Colonic mucosa (tissue), 4 donors: ENCODE measurements at regions of chr3 and their contacts with region 1.

Region 1: GRCh38 chr3:149273096-149273751 is 51.6 kb upstream of the CP start:
- DNase-seq: peak; percentile 53
- H3K4me3 ChIP-seq: no peak overlapping the region
- H3K27ac ChIP-seq: no peak overlapping the region
- H3K4me1 ChIP-seq: peaks cover 3% of the 10 kb centered on the region
- H3K27me3 ChIP-seq: no peaks in the 10 kb centered on the region
- CTCF ChIP-seq: peak; percentile 88

Region 2: GRCh38 chr3:148955544-148956346 is 317.5 kb before region 1 on chr3:
- intact Hi-C with region 1: loop called (anchors 5 kb)
- DNase-seq: peak; percentile 50
- H3K4me3 ChIP-seq: no peak overlapping the region
- H3K27ac ChIP-seq: peak overlapping the region; percentile 50
- H3K4me1 ChIP-seq: no peaks in the 10 kb centered on the region
- H3K27me3 ChIP-seq: no peaks in the 10 kb centered on the region
- CTCF ChIP-seq: peak; percentile 44

Region 3: DNA sequence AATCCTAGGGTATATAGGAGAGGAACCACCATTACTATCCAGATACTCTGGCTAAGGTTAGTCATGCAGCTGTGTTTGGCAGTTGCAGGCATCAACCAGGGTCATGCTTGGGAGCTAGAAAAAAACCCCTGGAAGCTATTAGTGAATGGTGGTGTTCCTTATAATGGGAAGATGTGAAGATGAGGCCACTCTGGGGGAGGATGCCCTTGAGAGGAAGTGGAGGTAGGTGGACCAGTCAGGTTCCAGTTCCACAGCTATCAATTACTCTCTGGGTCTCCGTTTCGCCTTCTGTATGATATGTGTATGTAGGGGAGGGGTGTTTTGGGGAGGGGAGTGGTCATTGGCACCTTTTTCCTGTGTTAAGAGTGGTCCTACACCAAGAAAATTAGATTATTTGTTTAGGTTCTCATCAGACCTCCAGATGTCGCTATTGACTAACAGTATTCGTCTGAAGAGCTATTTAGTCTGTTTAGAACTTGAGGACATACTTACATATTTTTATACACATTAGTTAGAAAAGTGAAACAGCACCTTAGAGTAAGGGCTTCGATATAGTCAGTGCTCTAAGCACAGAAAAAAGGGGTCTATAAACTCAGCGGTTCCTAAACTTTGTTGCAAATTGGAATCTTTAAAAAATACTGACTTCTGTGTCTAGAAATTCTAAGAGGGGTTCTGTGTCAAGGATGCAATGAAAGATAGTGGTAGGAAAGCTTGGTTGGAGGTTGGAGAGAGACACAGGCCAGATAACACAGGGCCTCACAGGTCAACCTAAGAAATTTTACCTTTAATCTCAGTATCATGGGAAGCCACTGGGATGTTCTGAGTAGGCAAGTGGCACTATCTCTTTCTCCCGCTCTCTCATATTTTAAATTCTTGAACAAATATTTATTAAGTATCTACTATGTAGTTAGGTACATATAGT is 152.9 kb before region 1 on chr3:
- intact Hi-C with region 1: loop called (anchors 2 kb)
- DNase-seq: no peak
- H3K4me3 ChIP-seq: no peak overlapping the region
- H3K27ac ChIP-seq: no peak overlapping the region
- H3K4me1 ChIP-seq: no peaks in the 10 kb centered on the region
- H3K27me3 ChIP-seq: no peaks in the 10 kb centered on the region
- CTCF ChIP-seq: peak; percentile 51